ENCODE measurements at regions of chr1 and their contacts with region 1.

Region 1: GRCh38 chr1:28437934-28438699 is 67.7 kb upstream of the RCC1 start:
- DNase-seq: peak; percentile 69
- ATAC-seq: peak; percentile 99

Region 2: GRCh38 chr1:28248283-28249012 is 189.7 kb before region 1 on chr1:
- intact Hi-C with region 1: loop called (anchors 5 kb)
- DNase-seq: peak; percentile 90
- ATAC-seq: peak; percentile 66